ENCODE measurements at regions of chr2 and their contacts with region 1.

Region 1: DNA sequence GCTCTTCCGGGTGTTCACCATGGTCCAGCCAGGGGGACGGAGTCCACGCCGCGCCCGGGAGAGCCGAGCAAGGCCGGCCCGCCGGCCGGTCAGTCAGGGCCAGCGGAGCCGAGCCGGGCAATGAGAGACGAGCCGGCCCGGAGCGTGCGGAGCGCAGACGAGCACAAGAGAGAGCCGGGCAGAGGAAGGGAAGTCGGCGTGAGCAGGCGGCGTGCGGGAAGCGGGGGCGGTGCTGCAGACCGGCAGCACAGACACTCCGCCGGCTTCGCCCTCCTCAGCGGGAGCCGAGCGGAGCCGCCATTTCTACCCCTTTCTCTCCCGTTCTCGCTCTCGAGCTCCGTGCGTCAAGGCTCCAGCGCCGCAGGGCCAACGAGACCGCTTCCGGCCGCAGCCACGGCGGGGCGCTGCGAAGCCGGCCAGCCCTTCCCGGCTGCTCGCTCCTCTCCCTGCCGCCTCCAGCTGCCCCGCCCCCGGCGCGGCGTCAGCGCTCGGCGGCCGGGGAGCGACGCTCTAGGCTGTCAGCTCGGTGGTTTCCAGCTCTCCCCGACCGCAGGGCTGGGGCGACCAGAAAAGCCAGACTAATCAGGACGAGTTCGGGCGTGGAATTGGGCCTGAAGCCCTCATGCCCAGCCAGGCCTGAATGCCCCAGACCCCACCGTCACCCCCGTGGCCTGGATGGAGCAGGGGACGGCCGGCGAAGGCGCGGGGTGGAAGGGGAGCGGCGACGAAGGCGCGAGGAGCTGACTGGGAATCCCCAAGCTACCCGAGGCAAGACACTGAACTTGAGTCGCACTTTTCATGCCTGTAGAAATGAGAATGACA is at the start of gene ATAD2B:
- DNase-seq: peak; percentile 93
- H3K4me3 Mint-ChIP-seq: peak within 1 kb of the TSS; percentile 95
- H3K27ac Mint-ChIP-seq: peak within 1 kb of the TSS; percentile 99
- H3K4me1 Mint-ChIP-seq: peaks cover 40% of the 10 kb centered on the region
- H3K27me3 Mint-ChIP-seq: peaks cover 2% of the 10 kb centered on the region
- total RNA-seq, gene ATAD2B: 25.9 and 27.8 TPM in 2 replicates

Region 2: GRCh38 chr2:23532391-23533337 is 394.3 kb before region 1 on chr2:
- intact Hi-C with region 1: no loop called
- DNase-seq: peak; percentile 21
- H3K4me3 Mint-ChIP-seq: peak overlapping the region; percentile 74
- H3K27ac Mint-ChIP-seq: peak overlapping the region; percentile 89
- H3K4me1 Mint-ChIP-seq: peaks cover 32% of the 10 kb centered on the region
- H3K27me3 Mint-ChIP-seq: peaks cover 6% of the 10 kb centered on the region

Region 3: GRCh38 chr2:23813438-23813837 is 113.5 kb before region 1 on chr2:
- intact Hi-C with region 1: no loop called
- DNase-seq: no peak
- H3K4me3 Mint-ChIP-seq: no peak overlapping the region
- H3K27ac Mint-ChIP-seq: no peak overlapping the region
- H3K4me1 Mint-ChIP-seq: peaks cover 17% of the 10 kb centered on the region
- H3K27me3 Mint-ChIP-seq: no peaks in the 10 kb centered on the region

Region 4: DNA sequence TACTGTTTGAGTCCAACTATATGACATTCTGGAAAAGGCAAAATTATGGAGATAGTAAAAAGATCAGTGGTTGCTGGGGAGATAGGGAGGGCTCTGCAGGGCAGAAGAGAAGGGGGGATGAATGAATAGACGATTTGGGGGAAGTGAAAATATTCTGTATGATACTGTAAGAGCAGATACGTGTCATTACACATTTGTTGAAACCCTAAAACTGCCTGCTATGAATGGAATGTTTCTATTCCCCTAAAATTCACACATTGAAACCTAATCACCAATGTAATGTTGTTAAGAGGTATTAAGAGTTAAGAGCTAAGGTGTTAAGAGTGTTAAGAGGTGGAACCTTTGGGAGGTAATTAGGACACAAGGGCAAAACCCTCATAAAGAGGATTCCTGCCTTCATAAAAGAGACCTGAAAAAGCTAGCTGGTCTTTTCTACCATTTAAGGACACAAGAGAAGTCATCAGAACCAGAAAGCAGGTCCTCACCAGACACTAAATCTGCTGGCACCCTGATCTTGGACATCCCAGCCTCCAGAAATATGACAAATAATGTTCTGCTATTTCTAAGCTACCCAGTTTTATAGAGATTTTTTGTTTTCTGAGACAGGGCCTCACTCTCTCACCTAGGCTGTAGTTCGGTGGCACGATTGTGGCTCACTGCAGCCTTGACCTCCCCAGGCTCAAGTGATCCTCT is 76.3 kb before region 1 on chr2:
- intact Hi-C with region 1: no loop called
- DNase-seq: no peak
- H3K4me3 Mint-ChIP-seq: no peak overlapping the region
- H3K27ac Mint-ChIP-seq: no peak overlapping the region
- H3K4me1 Mint-ChIP-seq: no peaks in the 10 kb centered on the region
- H3K27me3 Mint-ChIP-seq: no peaks in the 10 kb centered on the region

Region 5: GRCh38 chr2:23912054-23912453 is 14.9 kb before region 1 on chr2:
- intact Hi-C with region 1: no loop called
- DNase-seq: no peak
- H3K4me3 Mint-ChIP-seq: no peak overlapping the region
- H3K27ac Mint-ChIP-seq: no peak overlapping the region
- H3K4me1 Mint-ChIP-seq: peaks cover 31% of the 10 kb centered on the region
- H3K27me3 Mint-ChIP-seq: no peaks in the 10 kb centered on the region

Region 6: DNA sequence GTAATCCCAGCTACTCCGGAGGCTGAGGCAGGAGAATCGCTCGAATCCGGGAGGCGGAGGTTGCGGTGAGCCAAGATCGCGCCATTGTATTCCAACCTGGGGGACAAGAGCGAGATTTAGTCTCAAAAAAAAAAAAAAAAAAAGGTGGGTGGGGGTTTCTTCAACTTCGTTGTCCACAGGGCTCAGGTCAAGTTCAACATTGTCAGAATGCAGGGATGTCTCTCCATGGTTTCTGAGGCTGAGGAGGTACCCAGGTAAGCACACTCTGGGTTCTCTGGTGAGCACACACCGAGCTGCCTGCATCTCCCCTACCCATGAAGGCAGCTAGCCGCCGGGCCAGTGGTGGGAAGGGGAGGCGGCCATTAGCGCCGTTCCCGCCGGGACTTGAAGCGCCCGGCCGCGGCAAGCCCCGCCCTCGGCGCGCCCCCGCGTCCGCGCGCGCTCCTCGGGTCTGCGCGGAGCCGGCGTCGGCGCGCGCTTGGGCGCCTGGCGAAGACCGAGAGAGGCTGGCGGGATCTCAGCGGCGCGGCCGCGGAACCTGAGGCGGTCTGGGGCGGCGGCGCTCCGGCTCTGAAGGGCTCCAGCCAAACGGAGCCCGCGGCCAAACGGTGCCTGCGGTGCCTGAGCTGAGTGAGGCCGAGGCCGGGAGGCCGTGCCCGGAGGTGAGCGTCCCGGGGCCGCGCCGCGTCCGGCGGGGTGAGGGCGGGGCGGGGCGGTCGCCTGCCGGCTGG is 13.2 kb after region 1 on chr2 and contains the start of gene UBXN2A:
- intact Hi-C with region 1: loop called (anchors 1 kb)
- DNase-seq: peak; percentile 72
- H3K4me3 Mint-ChIP-seq: peak within 1 kb of the TSS; percentile 89
- H3K27ac Mint-ChIP-seq: peak within 1 kb of the TSS; percentile 74
- H3K4me1 Mint-ChIP-seq: peaks cover 26% of the 10 kb centered on the region
- H3K27me3 Mint-ChIP-seq: peaks cover 21% of the 10 kb centered on the region
- total RNA-seq, gene UBXN2A: 11.4 and 13.0 TPM in 2 replicates

Region 7: GRCh38 chr2:24075915-24076848 is 149.2 kb after region 1 on chr2 and contains the start of gene SF3B6:
- intact Hi-C with region 1: loop called (anchors 1 kb)
- DNase-seq: peak; percentile 98
- H3K4me3 Mint-ChIP-seq: peak within 1 kb of the TSS; percentile 98
- H3K27ac Mint-ChIP-seq: peak within 1 kb of the TSS; percentile 94
- H3K4me1 Mint-ChIP-seq: peaks cover 33% of the 10 kb centered on the region
- H3K27me3 Mint-ChIP-seq: peaks cover 2% of the 10 kb centered on the region
- total RNA-seq, gene SF3B6: 128 and 145 TPM in 2 replicates

Region 8: GRCh38 chr2:24123195-24123921 is 196.4 kb after region 1 on chr2 and contains the starts of genes FAM228B and PFN4:
- intact Hi-C with region 1: loop called (anchors 1 kb)
- DNase-seq: peak; percentile 66
- H3K4me3 Mint-ChIP-seq: peak within 1 kb of the TSS; percentile 85
- H3K27ac Mint-ChIP-seq: peak within 1 kb of the TSS; percentile 86
- H3K4me1 Mint-ChIP-seq: peaks cover 15% of the 10 kb centered on the region
- H3K27me3 Mint-ChIP-seq: no peaks in the 10 kb centered on the region
- total RNA-seq, gene FAM228B: 3.1 and 4.8 TPM in 2 replicates
- total RNA-seq, gene PFN4: not detected in 2 replicates

Region 9: DNA sequence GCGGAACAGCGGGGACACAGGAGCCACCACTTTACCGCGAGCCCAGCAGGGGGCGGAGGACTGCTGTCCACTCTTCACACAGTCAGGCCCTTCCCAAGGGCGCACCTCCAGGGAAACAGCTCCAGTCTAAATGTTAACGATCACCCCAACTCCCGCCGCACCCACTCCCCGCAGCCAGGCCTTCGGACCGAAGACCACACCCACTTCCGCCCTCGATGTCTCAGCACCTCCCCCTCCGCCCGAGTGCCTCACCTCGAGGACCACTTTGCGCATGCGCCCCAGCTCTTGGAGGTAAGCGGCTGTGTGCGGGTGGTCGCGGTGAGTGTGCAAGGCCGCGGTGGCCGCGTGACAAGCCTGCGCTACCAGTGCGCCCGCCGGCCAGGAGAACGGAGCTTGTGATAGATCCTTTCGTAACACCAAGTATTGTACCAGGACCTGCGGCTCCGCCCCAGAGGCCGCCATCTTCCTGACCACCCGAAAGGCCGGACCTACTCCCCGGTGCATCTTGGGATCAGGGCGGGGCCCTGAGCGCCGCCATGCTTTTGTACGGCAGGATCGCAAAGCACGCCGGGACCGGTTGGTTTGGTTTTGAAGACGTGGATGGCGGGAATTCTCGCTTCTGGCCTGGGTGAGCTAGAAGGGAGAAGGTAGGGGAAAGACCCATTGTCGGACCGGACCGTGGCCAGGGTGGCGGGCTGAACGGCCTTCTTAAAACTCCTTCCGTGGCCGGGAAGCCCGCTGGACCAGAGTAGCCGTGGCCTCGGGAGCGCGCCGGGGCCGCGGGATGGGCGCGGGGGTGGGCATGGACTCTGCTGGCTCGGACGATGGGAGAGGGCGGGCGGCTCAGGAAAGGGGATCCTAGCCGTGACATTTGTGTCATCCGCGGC is 866.2 kb after region 1 on chr2 and contains the starts of genes CENPO and PTRHD1:
- intact Hi-C with region 1: loop called (anchors 5 kb)
- DNase-seq: peak; percentile 92
- H3K4me3 Mint-ChIP-seq: peak within 1 kb of the TSS; percentile 95
- H3K27ac Mint-ChIP-seq: peak within 1 kb of the TSS; percentile 99
- H3K4me1 Mint-ChIP-seq: peaks cover 47% of the 10 kb centered on the region
- H3K27me3 Mint-ChIP-seq: peaks cover 1% of the 10 kb centered on the region
- total RNA-seq, gene CENPO: 44.7 and 48.3 TPM in 2 replicates
- total RNA-seq, gene PTRHD1: 16.5 and 17.3 TPM in 2 replicates